ENCODE measurements at regions of chr5 and their contacts with region 1.

Region 1: DNA sequence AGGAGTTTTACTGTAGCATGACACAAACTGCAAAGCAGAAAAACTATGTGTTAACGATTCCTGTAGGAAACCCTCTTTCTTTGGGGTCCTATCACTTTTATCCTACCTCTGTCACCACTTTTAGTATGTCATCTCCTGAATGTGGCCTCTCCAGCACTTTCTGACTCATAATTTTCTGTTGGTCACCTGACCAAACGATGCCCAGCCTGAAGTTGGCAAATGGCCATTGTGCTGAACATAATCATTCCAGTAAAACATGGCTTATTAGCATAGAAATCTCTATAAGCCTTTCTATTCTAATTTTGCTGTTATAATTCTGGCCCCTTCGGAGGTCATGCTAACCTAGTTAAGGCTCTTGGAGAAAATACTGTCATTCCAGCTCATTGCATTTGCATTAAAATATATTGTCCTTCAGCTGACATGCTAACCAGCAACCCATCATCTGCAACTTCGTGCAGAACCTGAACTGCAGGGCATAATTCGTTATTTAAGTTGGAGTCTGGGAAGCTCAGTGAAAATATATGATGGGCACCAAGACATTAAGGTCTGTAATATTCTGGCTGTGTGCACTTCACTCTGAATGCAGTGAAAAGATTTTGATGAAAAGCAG is 140.3 kb downstream of the NMUR2 start:
- DNase-seq: no peak
- H3K4me3 ChIP-seq: no peak overlapping the region
- H3K27ac ChIP-seq: no peak overlapping the region
- H3K4me1 ChIP-seq: no peaks in the 10 kb centered on the region
- H3K27me3 ChIP-seq: no peaks in the 10 kb centered on the region
- CTCF ChIP-seq: no peak

Region 2: DNA sequence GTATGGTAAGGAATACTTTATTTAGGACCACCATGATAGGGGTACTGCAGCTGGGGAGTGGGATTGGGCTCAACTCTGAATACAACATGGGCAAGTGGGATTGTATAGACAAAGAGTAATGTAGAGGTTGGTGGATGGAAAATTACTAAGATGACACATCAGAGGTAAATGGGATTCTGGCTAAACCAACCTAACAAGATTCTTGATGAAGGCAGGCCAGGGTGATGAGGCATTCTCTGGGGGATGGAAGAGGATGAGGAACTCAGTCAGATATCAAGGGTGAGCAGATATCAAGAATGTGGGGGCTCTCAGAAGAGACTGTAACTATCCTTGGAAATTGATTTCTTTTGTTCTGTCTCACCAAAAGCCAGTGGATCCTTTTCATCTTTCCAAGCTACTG is 33.1 kb after region 1 on chr5:
- CTCF ChIA-PET with region 1: no interaction called
- dilution Hi-C with region 1: no loop called
- in situ Hi-C with region 1: no loop called
- intact Hi-C with region 1: loop called (anchors 1 kb)
- DNase-seq: peak; percentile 19
- H3K4me3 ChIP-seq: no peak overlapping the region
- H3K27ac ChIP-seq: no peak overlapping the region
- H3K4me1 ChIP-seq: no peaks in the 10 kb centered on the region
- H3K27me3 ChIP-seq: no peaks in the 10 kb centered on the region
- CTCF ChIP-seq: no peak

Region 3: GRCh38 chr5:152349683-152350526 is 85.2 kb after region 1 on chr5:
- CTCF ChIA-PET with region 1: no interaction called
- dilution Hi-C with region 1: loop called (anchors 5 kb)
- in situ Hi-C with region 1: no loop called
- intact Hi-C with region 1: no loop called
- DNase-seq: peak; percentile 24
- H3K4me3 ChIP-seq: no peak overlapping the region
- H3K27ac ChIP-seq: no peak overlapping the region
- H3K4me1 ChIP-seq: no peaks in the 10 kb centered on the region
- H3K27me3 ChIP-seq: no peaks in the 10 kb centered on the region
- CTCF ChIP-seq: peak; percentile 94 to 97